Activated CD4-positive, alpha-beta T cell treated with anti-CD3 and anti-CD28 coated beads for 36 hours (primary cell): ENCODE measurements at regions of chr19 and their contacts with region 1.

Region 1: GRCh38 chr19:6767357-6768235 is at the start of gene SH2D3A:
- DNase-seq: peak; percentile 97
- ATAC-seq: peak; percentile 78
- H3K4me3 Mint-ChIP-seq: peak within 1 kb of the TSS; percentile 83
- H3K27ac Mint-ChIP-seq: peak within 1 kb of the TSS; percentile 94
- H3K4me1 Mint-ChIP-seq: peaks cover 42% of the 10 kb centered on the region
- H3K27me3 Mint-ChIP-seq: no peaks in the 10 kb centered on the region
- total RNA-seq, gene SH2D3A: 20.7 to 23.2 TPM

Region 2: DNA sequence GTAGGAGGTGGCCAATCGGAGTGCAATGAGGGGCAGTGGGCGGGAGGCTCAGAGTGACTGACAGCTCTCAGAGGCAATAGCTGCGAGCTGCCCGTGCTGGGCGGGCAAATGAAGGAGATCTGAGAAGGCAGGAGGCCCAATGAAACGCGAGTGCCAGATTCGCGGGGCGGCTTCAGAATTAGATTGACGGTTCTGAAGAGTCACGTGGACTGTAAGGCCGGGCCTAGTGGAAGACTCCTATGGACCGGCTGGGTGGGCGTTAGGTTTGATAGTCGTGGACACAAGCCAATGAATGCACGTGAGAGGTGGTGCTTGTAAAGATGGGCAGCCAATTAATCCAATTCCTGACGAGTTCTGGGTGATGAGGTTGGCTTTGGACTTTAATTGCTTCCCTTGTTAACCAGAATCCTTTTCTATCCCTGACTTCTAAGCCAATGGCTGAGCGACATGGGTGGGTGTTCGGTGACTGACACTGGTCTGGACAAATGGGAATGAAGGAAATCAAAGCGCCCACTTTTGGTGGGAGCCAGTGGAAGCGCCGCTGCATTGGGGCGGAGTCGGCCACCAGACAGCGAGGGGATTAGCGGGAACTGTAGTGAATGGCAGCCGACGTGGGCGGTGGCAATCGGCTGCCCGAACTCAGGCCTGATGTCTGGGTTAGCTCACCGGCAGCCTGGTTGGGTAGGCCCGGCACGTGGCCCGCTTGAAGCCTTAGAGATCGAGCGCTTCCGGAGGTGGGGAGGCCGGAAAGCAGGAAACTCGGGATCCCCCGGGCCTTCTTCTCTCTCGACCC is 342.5 kb before region 1 on chr19:
- CTCF ChIA-PET with region 1: no interaction called
- POLR2A ChIA-PET with region 1: no interaction called
- intact Hi-C with region 1: loop called in 1 of 2 experiments (anchors 1 kb)
- DNase-seq: peak; percentile 100
- ATAC-seq: peak; percentile 88
- H3K4me3 Mint-ChIP-seq: peak overlapping the region; percentile 73
- H3K27ac Mint-ChIP-seq: peak overlapping the region; percentile 98
- H3K4me1 Mint-ChIP-seq: peaks cover 31% of the 10 kb centered on the region
- H3K27me3 Mint-ChIP-seq: no peaks in the 10 kb centered on the region

Region 3: DNA sequence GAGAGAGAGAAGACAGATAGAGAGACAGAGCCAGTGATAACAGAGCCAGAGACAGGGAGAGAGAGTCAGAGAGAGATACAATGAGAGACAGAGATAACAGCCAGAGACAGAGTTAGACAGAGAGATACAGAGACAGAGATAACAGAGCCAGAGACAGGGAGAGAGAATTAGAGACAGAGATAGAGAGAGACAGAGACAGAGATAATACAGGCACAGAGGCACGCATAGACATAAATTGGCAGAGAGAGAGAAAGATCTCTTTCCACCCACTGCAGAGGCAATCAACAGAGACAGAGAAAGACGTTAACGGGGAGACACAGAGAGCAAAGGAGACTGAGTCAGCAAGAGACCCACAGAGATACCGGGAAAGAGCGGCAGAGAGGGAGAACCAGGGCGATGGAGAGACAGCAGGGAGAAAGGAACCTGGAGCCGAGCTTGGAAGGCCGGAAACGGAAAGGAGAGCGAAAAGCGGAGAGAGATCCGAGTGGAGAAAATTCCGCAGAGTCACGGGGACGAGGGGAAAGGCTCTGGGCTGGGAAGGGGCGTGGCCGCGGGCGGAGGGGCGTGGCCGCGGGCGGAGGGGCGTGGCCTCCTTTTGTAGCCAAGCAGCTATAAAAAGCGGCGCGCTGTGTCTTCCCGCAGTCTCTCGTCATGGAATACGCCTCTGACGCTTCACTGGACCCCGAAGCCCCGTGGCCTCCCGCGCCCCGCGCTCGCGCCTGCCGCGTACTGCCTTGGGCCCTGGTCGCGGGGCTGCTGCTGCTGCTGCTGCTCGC is 237.0 kb before region 1 on chr19 and contains the start of gene TNFSF9:
- CTCF ChIA-PET with region 1: no interaction called
- POLR2A ChIA-PET with region 1: no interaction called
- intact Hi-C with region 1: no loop called
- DNase-seq: peak; percentile 90
- ATAC-seq: peak; percentile 73
- H3K4me3 Mint-ChIP-seq: peak within 1 kb of the TSS; percentile 77
- H3K27ac Mint-ChIP-seq: peak within 1 kb of the TSS; percentile 80
- H3K4me1 Mint-ChIP-seq: peaks cover 30% of the 10 kb centered on the region
- H3K27me3 Mint-ChIP-seq: peaks cover 36% of the 10 kb centered on the region
- total RNA-seq, gene TNFSF9: 0.49 to 0.57 TPM

Region 4: GRCh38 chr19:6674868-6675305 is 92.7 kb before region 1 on chr19:
- CTCF ChIA-PET with region 1: interaction called, 3 read pairs
- POLR2A ChIA-PET with region 1: no interaction called
- intact Hi-C with region 1: loop called in 1 of 2 experiments (anchors 1 kb)
- DNase-seq: peak; percentile 97
- ATAC-seq: peak; percentile 61
- H3K4me3 Mint-ChIP-seq: peak overlapping the region; percentile 57
- H3K27ac Mint-ChIP-seq: peak overlapping the region; percentile 93
- H3K4me1 Mint-ChIP-seq: peaks cover 75% of the 10 kb centered on the region
- H3K27me3 Mint-ChIP-seq: no peaks in the 10 kb centered on the region

Region 5: DNA sequence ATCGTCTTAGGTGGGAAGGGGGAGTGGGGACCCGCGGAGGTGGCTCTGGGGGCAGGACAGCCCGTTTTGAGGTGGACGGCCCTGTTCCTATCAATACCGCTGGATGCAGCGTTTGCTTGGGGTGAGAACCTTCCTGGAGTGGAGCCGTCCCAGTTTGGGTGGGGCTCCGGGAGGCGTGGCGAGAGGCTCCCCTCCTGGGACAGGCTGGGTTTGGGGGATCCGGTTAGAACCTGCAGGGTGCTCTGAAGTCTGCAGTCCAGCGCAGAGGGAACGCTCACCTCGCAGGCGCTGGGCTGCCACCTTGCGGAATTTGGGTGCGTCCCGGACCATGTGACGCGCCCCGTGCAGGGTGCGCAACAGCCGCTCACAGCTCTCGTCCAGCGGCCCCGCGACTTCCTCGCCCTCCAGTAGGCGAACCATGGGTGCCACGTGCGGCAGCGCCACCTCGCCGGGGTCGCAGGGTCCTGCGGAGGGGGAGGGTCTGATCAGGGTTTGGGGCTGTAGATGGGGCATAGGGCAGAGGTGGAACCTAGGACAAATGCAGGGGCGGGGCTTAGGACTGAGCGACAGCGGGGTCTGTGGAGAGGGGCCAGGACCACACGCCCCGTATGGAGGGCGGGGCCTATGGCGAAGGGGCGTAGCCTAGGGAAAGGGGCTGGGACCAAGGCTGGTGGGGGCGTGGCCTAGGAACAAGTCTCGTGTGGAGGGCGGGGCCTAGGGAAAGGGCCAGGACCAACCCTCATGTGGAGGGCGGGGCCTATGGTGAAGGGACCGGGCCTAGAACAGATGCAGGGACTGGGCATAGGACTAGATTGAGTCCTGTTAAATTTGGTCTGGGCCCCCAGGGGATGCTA is 14.2 kb before region 1 on chr19:
- CTCF ChIA-PET with region 1: interaction called, 3 read pairs
- POLR2A ChIA-PET with region 1: interaction called, 3 read pairs
- intact Hi-C with region 1: loop called (anchors 1 kb)
- DNase-seq: peak; percentile 93
- ATAC-seq: peak; percentile 94
- H3K4me3 Mint-ChIP-seq: peak overlapping the region; percentile 59
- H3K27ac Mint-ChIP-seq: peak overlapping the region; percentile 47
- H3K4me1 Mint-ChIP-seq: peaks cover 13% of the 10 kb centered on the region
- H3K27me3 Mint-ChIP-seq: no peaks in the 10 kb centered on the region

Region 6: DNA sequence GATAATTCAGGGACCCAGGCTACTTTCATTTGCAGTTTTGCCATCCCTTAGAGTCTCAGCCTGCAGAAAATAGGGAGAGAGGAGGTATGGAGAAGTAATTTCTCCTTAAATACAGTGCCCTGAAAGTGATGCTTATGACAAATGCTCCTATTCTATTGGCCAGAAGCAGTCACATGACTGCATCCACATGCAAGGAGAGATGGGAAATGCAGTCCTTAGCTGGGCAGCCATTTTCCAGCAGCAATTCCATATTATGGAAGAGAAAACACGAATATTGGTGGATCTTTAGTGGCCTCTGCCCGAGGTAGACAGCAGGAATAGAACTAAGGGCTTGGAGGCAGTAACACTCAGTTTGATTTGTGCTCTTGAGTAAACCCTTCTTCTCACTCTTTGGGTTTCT is 44.3 kb after region 1 on chr19:
- CTCF ChIA-PET with region 1: interaction called, 11 read pairs
- POLR2A ChIA-PET with region 1: interaction called, 3 read pairs
- intact Hi-C with region 1: no loop called
- DNase-seq: no peak
- ATAC-seq: no peak
- H3K4me3 Mint-ChIP-seq: no peak overlapping the region
- H3K27ac Mint-ChIP-seq: no peak overlapping the region
- H3K4me1 Mint-ChIP-seq: peaks cover 75% of the 10 kb centered on the region
- H3K27me3 Mint-ChIP-seq: no peaks in the 10 kb centered on the region

Region 7: DNA sequence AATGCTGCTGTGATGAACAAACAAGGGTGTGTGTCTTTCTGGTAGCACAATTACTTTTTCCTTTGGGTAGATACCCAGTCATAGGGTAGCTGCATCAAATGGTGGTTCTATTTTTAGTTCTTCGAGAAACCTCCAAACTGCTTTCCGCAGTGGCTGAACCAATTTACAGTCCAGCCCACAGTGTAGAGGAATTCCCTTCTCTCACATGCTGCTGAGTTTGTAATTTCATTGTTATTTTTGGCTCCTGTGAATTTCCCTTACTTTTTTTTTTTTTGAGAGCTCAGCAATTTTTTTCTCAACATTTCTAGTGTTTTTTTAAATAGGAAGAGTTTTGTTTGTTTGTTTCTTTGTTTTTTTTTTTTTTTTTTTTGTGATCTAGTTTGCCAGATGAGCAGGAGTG is 82.3 kb after region 1 on chr19:
- CTCF ChIA-PET with region 1: no interaction called
- POLR2A ChIA-PET with region 1: no interaction called
- intact Hi-C with region 1: no loop called
- DNase-seq: no peak
- ATAC-seq: no peak
- H3K4me3 Mint-ChIP-seq: no peak overlapping the region
- H3K27ac Mint-ChIP-seq: no peak overlapping the region
- H3K4me1 Mint-ChIP-seq: no peaks in the 10 kb centered on the region
- H3K27me3 Mint-ChIP-seq: no peaks in the 10 kb centered on the region

Region 8: DNA sequence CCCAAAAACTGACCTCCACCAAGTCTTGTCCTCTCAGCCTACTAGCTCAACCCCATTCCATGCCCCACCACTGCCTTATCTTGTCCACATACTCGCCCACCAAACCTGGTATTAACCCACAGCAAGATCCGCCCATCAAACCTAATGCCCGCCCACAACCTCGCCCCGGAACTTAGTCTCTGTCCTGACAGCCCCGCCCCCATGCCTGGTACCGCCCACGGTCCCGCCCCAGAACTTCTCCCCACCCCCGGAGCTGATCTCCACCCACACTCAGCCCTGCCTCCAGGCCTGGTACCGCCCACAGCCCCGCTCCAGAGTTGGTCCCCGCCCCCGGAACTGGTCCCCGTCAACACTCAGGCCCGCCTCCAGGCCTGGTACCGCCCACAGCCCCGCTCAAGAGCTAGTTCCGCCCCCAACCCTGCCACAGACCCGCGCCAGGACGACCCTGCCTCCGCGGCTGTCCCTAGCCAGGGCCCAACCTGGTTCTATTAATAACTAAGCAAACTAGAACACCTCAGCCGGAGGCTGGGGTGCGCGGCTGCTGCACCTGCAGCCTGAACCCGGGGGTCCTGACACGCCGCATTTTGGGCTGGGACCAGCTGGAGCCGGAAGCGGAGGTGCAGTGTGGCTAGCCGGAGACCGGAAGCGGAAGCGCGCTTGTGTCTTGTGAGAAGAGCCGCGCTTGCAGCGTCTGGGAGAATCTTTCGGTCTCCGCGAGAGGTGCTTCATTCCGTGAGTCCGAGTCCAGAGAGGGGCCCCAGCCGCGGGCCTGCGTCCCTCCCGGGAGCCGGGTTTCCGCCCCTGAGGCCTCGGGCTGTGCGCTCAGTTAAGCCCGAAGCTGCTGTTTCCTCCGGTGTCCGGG is 301.7 kb after region 1 on chr19 and contains the start of gene ZNF557:
- CTCF ChIA-PET with region 1: no interaction called
- POLR2A ChIA-PET with region 1: no interaction called
- intact Hi-C with region 1: loop called in 1 of 2 experiments (anchors 1 kb)
- DNase-seq: peak; percentile 100
- ATAC-seq: peak; percentile 96
- H3K4me3 Mint-ChIP-seq: peak within 1 kb of the TSS; percentile 90
- H3K27ac Mint-ChIP-seq: peak within 1 kb of the TSS; percentile 77
- H3K4me1 Mint-ChIP-seq: peaks cover 17% of the 10 kb centered on the region
- H3K27me3 Mint-ChIP-seq: no peaks in the 10 kb centered on the region
- total RNA-seq, gene ZNF557: 8.9 to 9.6 TPM